ENCODE measurements at regions of chr5 and their contacts with region 1.

Region 1: DNA sequence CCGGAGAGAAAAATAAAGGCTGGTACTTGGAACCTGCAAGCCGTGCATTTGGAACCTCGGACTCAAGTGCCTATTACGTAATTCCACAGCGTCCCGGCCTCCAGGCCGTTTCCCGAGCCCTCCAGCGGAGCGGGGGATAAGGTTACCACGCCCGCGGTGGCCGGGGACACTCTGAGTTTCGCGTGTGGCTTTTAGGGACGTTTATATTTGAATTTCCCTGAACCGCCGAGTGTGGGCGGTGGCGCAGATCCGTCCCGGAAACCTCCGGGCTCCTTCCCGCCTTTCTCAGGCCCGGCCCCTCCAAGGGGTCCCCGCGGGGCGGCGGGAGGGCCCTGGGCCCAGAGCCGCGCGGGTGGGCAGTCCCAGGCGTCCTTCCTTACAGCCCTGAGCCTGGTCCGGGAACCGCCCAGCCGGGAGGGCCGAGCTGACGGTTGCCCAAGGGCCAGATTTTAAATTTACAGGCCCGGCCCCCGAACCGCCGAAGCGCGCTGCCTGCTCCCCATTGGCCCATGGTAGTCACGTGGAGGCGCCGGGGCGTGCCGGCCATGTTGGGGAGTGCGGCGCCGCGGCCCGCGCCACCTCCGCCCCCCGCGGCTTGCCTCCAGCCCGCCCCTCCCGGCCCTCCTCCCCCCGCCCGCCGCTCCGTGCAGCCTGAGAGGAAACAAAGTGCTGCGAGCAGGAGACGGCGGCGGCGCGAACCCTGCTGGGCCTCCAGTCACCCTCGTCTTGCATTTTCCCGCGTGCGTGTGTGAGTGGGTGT is at the start of gene LMNB1:
- DNase-seq: peak; percentile 96
- H3K4me3 ChIP-seq: peak within 1 kb of the TSS; percentile 96
- H3K27ac ChIP-seq: peak within 1 kb of the TSS; percentile 95
- H3K4me1 ChIP-seq: peaks cover 19% of the 10 kb centered on the region
- CTCF ChIP-seq: no peak; the same call in 1 of the 2 replicates
- total RNA-seq, gene LMNB1: 173 and 232 TPM in 2 replicates

Region 2: DNA sequence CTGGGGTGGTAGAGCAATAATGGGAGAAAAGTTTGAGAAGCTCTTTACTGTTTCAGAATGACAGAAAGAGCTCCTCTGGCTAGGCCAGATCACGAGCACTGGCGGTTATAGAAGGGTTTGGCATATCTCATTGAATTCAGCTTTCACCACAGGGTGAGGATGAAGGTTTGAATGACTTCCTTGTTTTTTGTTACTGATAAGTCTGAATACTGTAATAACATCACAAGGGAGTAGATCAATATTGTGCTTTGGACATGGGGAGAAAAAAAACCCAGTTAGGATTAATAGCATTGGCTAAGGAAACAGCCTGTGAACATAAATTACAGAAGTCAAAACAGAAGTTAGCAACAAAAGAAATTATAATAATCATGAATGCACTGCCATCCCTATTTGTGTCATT is 166.5 kb before region 1 on chr5:
- CTCF ChIA-PET with region 1: interaction called, 3 read pairs
- POLR2A ChIA-PET with region 1: interaction called, 13 read pairs
- intact Hi-C with region 1: no loop called
- DNase-seq: no peak
- H3K4me3 ChIP-seq: peak overlapping the region; percentile 86
- H3K27ac ChIP-seq: peak overlapping the region; percentile 97
- H3K4me1 ChIP-seq: peaks cover 94% of the 10 kb centered on the region
- CTCF ChIP-seq: no peak

Region 3: DNA sequence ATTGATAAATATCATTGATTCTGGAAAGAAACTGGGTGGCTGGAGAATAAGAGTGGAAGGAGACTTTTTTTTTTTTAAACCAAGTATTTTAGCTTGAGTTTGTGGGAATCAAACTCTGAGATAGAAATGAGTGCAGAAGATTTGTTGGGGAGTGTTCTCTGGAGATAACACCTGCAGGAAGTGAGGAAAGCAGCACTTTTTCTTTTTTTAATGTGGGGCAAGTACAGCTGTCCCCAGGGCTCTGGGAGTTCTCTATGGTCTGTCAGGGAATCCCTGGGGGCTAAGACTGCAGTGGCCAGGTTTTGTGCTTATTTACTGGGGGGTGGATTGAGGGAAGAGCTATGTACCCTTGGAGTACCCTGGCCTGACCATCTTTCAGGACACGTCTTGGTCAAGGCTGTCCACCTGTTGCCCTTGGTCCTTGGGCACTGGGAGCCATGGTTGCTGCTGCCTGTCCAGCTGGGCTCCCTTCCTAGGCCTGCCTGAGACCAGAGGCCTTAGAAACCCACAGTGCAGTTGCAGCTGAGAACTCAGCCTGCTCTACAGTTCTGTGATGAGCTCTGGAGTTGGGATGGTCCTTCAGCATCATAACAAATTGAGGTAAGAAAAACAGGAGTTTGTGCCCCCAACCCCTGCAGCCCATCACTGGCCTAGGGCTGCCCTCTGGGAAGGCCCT is 90.1 kb before region 1 on chr5:
- CTCF ChIA-PET with region 1: no interaction called
- POLR2A ChIA-PET with region 1: interaction called, 18 read pairs
- intact Hi-C with region 1: no loop called
- DNase-seq: peak; percentile 70
- H3K4me3 ChIP-seq: no peak overlapping the region
- H3K27ac ChIP-seq: no peak overlapping the region
- H3K4me1 ChIP-seq: peaks cover 17% of the 10 kb centered on the region
- CTCF ChIP-seq: no peak

Region 4: DNA sequence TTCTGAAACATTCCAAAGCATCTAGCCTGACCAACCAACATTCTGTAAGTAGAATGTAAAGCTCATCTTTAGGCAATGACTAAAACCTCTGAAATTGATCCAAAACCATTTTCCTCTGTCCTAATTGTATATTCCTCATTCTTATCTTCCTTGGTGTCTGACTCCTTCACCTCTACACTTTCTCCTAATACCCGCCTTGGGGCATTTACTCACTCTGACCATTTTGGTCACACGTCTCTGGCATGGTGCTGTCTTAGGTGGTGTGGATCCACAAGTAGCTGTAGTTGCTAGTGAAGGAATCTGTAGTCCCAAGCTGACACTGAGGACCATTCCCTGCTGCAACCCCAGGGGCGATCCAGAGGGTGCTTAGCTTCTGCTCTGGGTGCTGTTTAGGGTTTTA is 40.5 kb before region 1 on chr5:
- CTCF ChIA-PET with region 1: no interaction called
- POLR2A ChIA-PET with region 1: no interaction called
- intact Hi-C with region 1: no loop called
- DNase-seq: no peak
- H3K4me3 ChIP-seq: no peak overlapping the region
- H3K27ac ChIP-seq: no peak overlapping the region
- H3K4me1 ChIP-seq: no peaks in the 10 kb centered on the region
- CTCF ChIP-seq: no peak

Region 5: DNA sequence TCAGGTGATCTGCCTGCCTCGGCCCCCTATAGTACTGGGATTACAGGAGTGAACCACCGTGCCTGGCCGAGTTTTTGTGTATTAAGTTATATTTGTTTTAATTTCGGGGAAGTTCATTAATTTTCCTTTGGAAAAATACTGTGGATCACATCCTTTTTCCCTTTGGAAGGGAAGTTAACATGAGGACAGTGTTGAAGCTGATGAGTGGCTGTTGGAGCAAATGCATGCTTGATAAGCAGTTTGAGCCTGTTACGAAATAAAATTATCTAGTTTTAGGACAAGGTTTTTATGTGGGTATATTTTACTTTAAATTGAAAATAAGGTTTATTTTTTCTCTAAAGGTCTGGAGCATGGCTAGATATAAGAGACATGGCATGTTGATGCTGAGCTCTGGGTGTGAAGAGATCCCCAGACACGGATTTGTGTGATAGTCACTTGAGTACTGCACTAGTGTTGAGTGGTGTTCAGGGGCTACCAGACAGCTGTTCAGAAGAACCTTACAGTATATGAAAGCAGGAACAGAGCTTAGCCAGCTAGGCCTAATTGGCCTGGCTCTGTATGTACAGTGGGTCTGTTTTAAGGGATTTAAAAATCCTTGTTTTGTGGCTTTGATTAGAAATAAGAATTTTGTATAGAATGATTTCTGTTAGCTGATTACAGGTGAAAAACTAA is 17.6 kb after region 1 on chr5:
- CTCF ChIA-PET with region 1: interaction called, 4 read pairs
- POLR2A ChIA-PET with region 1: interaction called, 22 read pairs
- intact Hi-C with region 1: no loop called
- DNase-seq: peak; percentile 30
- H3K4me3 ChIP-seq: no peak overlapping the region
- H3K27ac ChIP-seq: no peak overlapping the region
- H3K4me1 ChIP-seq: peaks cover 55% of the 10 kb centered on the region
- CTCF ChIP-seq: no peak

Region 6: GRCh38 chr5:126972062-126972895 is 195.6 kb after region 1 on chr5:
- CTCF ChIA-PET with region 1: interaction called, 4 read pairs
- POLR2A ChIA-PET with region 1: interaction called, 4 read pairs
- intact Hi-C with region 1: loop called (anchors 5 kb)
- DNase-seq: peak; percentile 83
- H3K4me3 ChIP-seq: peak overlapping the region; percentile 63
- H3K27ac ChIP-seq: peak overlapping the region; percentile 90
- H3K4me1 ChIP-seq: peaks cover 78% of the 10 kb centered on the region
- CTCF ChIP-seq: no peak

Region 7: GRCh38 chr5:127072861-127073846 is 296.5 kb after region 1 on chr5 and contains the start of gene C5orf63:
- CTCF ChIA-PET with region 1: no interaction called
- POLR2A ChIA-PET with region 1: no interaction called
- intact Hi-C with region 1: no loop called
- DNase-seq: peak; percentile 82
- H3K4me3 ChIP-seq: peak within 1 kb of the TSS; percentile 70
- H3K27ac ChIP-seq: no peak within 1 kb of the TSS
- H3K4me1 ChIP-seq: peaks cover 10% of the 10 kb centered on the region
- CTCF ChIP-seq: no peak
- total RNA-seq, gene C5orf63: 4.2 and 5.5 TPM in 2 replicates

Region 8: DNA sequence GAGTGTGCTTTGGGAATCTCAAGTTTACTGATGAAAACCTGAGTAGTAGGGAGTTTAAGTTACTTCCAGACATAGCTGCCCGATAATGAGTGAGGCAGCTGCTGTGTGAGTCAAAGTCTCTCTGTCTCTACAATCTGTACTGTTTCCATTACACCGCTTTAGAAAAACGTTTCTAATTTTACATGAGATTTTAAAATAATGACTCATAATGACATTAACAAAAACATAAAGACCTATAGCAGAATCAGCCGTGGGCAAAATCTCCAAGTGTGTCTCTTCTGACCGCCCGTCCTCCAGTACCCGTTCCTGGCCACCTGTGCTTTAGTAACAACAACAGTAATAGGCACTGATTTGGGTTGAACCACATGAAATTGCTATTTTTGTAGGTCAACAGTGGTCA is 671.1 kb after region 1 on chr5:
- CTCF ChIA-PET with region 1: no interaction called
- POLR2A ChIA-PET with region 1: no interaction called
- intact Hi-C with region 1: no loop called
- DNase-seq: no peak
- H3K4me3 ChIP-seq: no peak overlapping the region
- H3K27ac ChIP-seq: no peak overlapping the region
- H3K4me1 ChIP-seq: no peaks in the 10 kb centered on the region
- CTCF ChIP-seq: no peak

Region 9: DNA sequence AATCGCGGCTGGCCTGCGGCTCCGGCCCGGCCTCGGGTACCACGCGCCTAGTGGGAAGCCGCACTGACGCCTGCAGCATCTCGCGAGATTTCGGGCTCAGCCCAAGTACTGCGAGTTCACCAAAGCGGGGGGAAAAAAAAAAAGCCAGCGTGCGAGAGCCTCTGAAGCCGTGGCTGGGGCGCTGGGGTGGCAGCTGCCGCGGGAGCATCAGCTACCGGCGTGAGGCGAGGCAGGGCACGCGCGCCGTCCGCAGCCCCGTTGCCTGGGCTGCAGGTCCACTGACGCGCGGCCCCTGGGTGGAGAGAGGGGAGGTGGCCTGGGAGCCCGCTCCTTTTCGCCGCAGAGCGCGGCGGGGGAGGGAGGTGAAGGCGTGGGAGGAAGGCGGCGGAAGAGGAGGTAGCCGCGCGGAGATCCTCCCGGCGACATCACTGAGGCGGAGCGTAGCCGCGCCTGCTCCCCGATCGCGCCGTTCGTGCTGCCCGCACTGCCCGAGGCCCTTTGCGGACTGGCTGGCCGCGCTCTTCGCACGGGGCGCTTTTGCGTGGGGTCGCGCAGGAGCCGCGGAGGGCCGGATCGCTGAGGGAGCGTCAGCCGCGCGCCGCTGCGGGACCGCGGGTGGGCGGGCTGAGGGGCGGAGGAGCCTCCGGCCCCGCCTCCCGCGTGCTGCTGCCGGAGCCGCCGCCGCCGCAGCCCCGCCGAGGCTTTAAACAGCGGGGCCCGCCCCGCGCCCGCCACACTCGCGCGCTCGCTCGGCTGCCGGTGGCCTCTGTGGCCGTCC is 1306.5 kb after region 1 on chr5 and contains the start of gene SLC12A2:
- CTCF ChIA-PET with region 1: no interaction called
- POLR2A ChIA-PET with region 1: no interaction called
- intact Hi-C with region 1: loop called (anchors 2 kb)
- DNase-seq: peak; percentile 96
- H3K4me3 ChIP-seq: peak within 1 kb of the TSS; percentile 83
- H3K27ac ChIP-seq: peak within 1 kb of the TSS; percentile 92
- H3K4me1 ChIP-seq: peaks cover 43% of the 10 kb centered on the region
- CTCF ChIP-seq: no peak
- total RNA-seq, gene SLC12A2: 20.6 and 24.1 TPM in 2 replicates